AG04450 (cell line): ENCODE measurements at regions of chr14 and their contacts with region 1.

Region 1: GRCh38 chr14:54420013-54420809 is 21.0 kb downstream of the CNIH1 start:
- DNase-seq: no peak
- H3K4me3 ChIP-seq: no peak overlapping the region
- H3K27ac ChIP-seq: no peak overlapping the region
- H3K27me3 ChIP-seq: no peaks in the 10 kb centered on the region
- CTCF ChIP-seq: peak; percentile 78

Region 2: GRCh38 chr14:54366736-54367735 is 53.2 kb before region 1 on chr14:
- CTCF ChIA-PET with region 1: interaction called, 11 read pairs
- POLR2A ChIA-PET with region 1: no interaction called
- DNase-seq: peak; percentile 32
- H3K4me3 ChIP-seq: no peak overlapping the region
- H3K27ac ChIP-seq: peak overlapping the region; percentile 25
- H3K27me3 ChIP-seq: no peaks in the 10 kb centered on the region
- CTCF ChIP-seq: peak; percentile 65

Region 3: GRCh38 chr14:54396493-54397335 is 23.5 kb before region 1 on chr14 and contains the start of gene CDKN3:
- CTCF ChIA-PET with region 1: interaction called, 10 read pairs
- POLR2A ChIA-PET with region 1: no interaction called
- DNase-seq: peak; percentile 96
- H3K4me3 ChIP-seq: peak within 1 kb of the TSS; percentile 92
- H3K27ac ChIP-seq: peak within 1 kb of the TSS; percentile 52
- H3K27me3 ChIP-seq: no peaks in the 10 kb centered on the region
- CTCF ChIP-seq: peak; percentile 40; the same call in 1 of the 2 replicates
- polyA plus RNA-seq, gene CDKN3: 20.8 and 28.9 TPM in 2 replicates

Region 4: GRCh38 chr14:54435500-54435981 is 15.3 kb after region 1 on chr14:
- CTCF ChIA-PET with region 1: interaction called, 18 read pairs
- POLR2A ChIA-PET with region 1: no interaction called
- DNase-seq: no peak
- H3K4me3 ChIP-seq: no peak overlapping the region
- H3K27ac ChIP-seq: no peak overlapping the region
- H3K27me3 ChIP-seq: no peaks in the 10 kb centered on the region
- CTCF ChIP-seq: no peak

Region 5: GRCh38 chr14:54450535-54450934 is 30.3 kb after region 1 on chr14:
- CTCF ChIA-PET with region 1: no interaction called
- POLR2A ChIA-PET with region 1: no interaction called
- DNase-seq: no peak
- H3K4me3 ChIP-seq: no peak overlapping the region
- H3K27ac ChIP-seq: no peak overlapping the region
- H3K27me3 ChIP-seq: peaks cover 2% of the 10 kb centered on the region
- CTCF ChIP-seq: no peak

Region 6: GRCh38 chr14:54483073-54483745 is 63.0 kb after region 1 on chr14:
- CTCF ChIA-PET with region 1: no interaction called
- POLR2A ChIA-PET with region 1: no interaction called
- DNase-seq: no peak
- H3K4me3 ChIP-seq: no peak overlapping the region
- H3K27ac ChIP-seq: no peak overlapping the region
- H3K27me3 ChIP-seq: no peaks in the 10 kb centered on the region
- CTCF ChIP-seq: no peak

Region 7: GRCh38 chr14:54737132-54737711 is 317.0 kb after region 1 on chr14:
- CTCF ChIA-PET with region 1: no interaction called
- POLR2A ChIA-PET with region 1: no interaction called
- DNase-seq: no peak
- H3K4me3 ChIP-seq: no peak overlapping the region
- H3K27ac ChIP-seq: no peak overlapping the region
- H3K27me3 ChIP-seq: no peaks in the 10 kb centered on the region
- CTCF ChIP-seq: no peak